Heart right ventricle (tissue), 16 donors: ENCODE measurements at regions of chr2 and their contacts with region 1.

Region 1: DNA sequence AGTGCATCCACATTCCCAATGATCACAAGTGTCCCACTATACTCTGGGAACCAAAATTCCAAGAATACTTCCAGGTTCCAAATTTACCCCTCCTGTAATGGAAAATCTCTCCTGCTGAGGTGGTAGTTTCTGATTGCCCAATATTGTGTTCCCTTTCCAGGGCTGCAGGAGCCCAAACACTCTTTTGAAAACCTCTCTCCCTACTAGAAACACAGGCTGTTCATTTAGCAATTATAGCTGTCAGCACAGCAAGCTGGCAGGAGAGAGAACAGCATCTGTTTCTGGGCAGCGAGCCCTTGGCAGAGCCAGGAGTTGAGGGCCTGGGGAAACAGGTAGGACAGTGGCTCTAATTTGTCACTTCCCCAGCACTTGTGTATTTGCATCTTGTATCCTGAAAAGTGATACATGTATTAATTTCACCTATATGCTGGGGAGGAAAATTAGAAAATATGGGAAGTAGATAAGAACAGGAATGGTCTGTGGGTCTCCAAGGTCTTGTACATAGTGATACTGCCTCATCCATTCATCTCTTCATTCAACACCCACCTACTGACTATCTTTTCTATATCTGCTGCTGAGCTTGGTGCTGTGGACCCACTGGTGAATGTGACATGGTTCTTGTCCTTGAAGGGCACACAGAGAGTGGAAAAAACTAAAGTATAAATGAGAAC is 16.9 kb upstream of the PAIP2B start:
- DNase-seq: peak; percentile 54 to 73
- ATAC-seq: peak; percentile 88 to 97 (median 95)
- H3K4me3 ChIP-seq: no peak overlapping the region
- H3K27ac ChIP-seq: peak overlapping the region in 9 of 10 donors; percentile 2 to 79 (median 71)
- H3K4me1 ChIP-seq: peaks cover 0 to 41% (median 14%) of the 10 kb centered on the region in 9 donors
- H3K27me3 ChIP-seq: no peaks in the 10 kb centered on the region
- CTCF ChIP-seq: no peak

Region 2: DNA sequence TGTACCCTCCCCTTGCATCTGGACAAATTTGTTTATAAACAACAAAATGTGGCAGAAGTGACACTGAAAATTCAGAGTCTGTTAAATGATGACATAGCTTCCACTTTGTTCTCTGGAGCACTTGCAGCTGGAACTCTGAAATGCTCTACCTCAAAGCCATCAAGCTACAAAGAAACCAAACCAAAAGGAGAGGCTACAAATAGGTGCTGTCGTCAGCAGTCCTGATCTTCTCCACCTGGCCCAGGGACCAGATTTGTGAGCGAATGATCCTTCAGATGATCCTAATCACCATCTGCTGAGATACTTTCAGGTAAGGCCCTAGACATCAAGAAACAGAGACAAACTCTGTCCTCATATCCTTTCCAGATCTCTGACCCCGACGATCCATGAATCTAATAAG is 11.0 kb after region 1 on chr2:
- intact Hi-C with region 1: loop called in 1 of 10 experiments (anchors 1 kb)
- DNase-seq: no peak
- ATAC-seq: no peak
- H3K4me3 ChIP-seq: no peak overlapping the region
- H3K27ac ChIP-seq: no peak overlapping the region
- H3K4me1 ChIP-seq: peaks cover 0 to 18% (median 0%) of the 10 kb centered on the region in 9 donors
- H3K27me3 ChIP-seq: peaks cover 0 to 5% (median 0%) of the 10 kb centered on the region in 7 donors
- CTCF ChIP-seq: no peak

Region 3: DNA sequence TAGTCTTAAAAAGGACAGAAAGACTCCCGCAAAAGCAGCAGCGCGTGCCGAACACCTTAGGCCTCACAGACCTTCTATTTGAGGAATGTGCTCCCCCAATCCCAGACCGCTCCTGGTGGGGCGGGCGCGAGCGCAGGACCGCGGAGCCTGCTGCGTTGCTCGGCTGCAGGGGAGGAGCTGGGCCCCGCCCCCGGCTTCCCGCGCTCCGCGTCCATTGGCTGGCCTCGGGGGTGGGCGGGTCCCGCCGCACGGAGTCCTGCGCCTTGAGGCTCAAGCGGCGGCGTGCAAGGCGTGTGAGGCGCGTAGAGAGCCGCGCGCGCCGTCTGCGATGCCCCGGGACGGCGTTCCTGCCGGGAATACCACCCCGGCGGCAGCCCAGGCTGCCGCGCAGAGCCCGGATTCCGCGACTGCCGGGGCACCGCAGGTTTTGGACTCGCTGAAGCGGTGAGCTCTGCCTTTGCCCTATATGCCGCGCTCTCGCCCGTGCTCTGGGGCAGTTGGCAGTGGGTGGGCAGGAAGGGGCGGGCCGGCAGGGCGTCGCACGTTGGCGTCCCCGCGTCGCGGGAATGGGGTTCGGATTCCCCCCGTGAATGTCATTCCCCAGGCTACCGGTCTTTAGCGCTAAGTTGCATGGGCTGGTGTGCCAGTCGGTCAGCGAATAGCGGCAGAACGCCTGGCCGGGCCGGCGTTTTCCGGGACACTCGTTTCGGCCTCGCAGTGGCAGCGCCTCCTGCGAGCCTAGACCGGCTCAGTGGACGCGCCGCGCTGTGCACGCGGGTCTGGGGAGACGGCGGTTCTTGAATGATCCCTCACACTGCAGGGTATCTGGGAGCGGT is 32.8 kb after region 1 on chr2:
- intact Hi-C with region 1: loop called in 2 of 10 experiments (anchors 5 kb)
- DNase-seq: peak; percentile 90 to 94
- ATAC-seq: peak; percentile 97 to 99 (median 98)
- H3K4me3 ChIP-seq: peak overlapping the region; percentile 55 to 73 (median 66)
- H3K27ac ChIP-seq: peak overlapping the region; percentile 77 to 93 (median 89)
- H3K4me1 ChIP-seq: peaks cover 0 to 53% (median 19%) of the 10 kb centered on the region in 9 donors
- H3K27me3 ChIP-seq: peaks cover 0 to 39% (median 0%) of the 10 kb centered on the region in 7 donors
- CTCF ChIP-seq: peak in 2 of 9 donors; percentile 12 to 18

Region 4: DNA sequence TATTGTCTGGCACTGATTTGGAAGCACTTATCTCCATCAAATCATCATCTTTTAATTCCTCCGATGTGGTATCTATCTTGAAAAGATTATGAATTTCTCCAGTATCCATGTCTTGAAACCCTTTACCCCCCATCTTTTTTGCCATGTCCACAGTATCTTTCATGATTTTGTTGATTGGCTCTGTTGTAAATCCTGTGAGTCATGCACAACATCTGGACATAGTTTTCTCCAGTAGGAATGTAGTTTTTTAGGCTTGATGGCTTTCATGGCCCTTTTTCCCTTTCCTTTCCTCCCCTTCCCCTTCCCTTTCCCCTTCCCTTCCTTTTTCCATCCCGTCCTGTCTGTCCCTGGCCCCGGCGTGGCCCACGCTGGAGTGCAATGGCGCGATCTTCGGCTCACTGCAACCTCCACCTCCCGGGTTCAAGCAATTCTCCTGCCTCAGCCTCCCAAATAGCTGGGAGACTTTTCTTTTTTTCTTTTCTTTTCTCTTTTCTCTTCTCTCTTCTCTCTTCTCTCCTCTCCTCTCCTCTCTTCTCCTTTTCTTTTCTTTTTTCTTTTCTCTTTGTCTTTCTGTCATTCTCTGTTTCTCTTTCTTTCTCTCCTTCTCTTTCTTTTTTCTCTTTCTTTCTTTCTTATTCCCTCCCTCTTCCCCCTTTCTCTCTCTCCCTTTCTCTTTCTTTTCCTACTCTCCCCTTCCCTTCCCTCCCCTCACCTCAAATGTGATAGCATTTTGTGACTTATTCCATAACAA is 69.4 kb after region 1 on chr2:
- intact Hi-C with region 1: no loop called
- DNase-seq: no peak
- ATAC-seq: no peak
- H3K4me3 ChIP-seq: no peak overlapping the region
- H3K27ac ChIP-seq: no peak overlapping the region
- H3K4me1 ChIP-seq: peaks cover 0 to 4% (median 0%) of the 10 kb centered on the region in 9 donors
- H3K27me3 ChIP-seq: no peaks in the 10 kb centered on the region
- CTCF ChIP-seq: no peak